Activated naive CD4-positive, alpha-beta T cell treated with anti-CD3 and anti-CD28 coated beads for 36 hours (primary cell): ENCODE measurements at regions of chr21 and their contacts with region 1.

Region 1: DNA sequence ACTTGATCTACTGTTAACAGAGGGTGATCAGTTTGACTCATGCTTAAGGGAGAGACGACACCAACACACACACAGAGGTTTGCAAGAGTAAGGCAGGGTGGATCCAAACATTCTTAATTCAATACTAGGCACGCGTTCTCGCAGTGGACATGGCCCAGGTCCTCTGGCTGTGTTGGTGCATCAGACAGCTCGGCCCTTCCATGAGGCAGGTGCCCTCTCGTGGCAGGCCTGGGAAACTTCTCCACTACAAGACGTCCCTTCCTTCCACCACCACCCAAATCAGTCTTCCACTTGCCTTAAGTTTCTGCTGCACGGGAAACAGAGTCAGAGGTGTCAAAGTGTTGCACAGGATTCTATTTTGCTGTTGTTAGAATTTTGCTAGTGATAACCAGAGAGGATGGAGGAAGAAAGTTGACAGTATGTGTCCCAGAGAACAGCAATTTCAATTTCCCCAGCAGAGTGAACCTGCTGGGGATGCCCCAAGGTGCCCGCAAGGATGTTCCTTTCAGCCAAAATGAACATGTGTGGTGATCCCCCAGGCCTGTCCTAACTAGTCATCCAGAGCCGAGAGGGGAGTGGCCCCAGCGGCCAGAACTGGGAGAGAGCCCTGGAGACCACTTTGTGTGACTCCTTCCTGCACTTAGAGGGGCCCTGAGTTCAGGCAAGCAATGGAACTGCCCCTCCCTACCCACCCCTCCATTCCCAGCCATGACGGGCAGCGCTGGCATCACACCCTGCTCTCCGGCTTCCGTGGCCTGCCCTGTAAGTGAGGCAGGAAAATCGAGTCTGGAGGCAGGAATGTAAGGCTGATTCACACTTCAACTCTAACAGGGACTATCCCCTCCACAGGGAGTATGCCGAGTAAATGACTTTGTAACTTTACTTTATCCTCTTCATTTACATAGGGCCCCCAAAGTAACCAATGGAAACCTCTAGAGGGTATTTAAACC is 34.8 kb downstream of the MX1 start:
- DNase-seq: peak; percentile 71
- H3K4me3 Mint-ChIP-seq: no peak overlapping the region
- H3K27ac Mint-ChIP-seq: no peak overlapping the region
- H3K4me1 Mint-ChIP-seq: no peaks in the 10 kb centered on the region
- H3K27me3 Mint-ChIP-seq: no peaks in the 10 kb centered on the region

Region 2: DNA sequence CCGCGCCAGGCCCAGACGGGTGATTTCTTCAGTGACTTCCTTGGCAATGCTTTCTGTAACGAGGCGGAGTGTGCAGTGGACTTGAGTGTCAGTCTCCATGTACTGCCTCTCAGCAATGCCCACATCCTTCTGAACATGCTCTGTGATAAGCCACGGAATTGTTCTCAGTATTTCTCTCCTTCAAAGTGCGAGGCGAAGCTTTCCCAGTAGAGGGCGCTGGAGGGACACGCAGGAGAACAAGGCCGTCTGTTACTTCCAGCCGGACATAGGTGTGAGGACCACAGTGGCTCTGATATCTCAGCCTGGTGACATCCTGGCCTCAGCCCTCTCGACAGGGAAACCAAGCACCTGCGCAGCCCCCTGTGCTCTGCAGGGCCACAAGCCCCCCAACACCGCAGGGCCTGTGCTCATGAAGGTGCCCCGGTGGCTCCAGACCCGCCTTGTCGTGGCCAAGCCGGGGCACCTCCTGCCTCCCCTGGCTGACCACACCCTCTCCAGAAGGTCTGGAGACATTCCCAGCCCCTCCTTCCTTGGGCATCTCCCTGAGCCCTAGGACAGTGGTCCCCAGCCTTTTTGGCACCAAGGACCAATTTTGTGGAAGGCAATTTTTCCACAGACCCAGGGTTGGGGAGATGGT is 338.9 kb before region 1 on chr21:
- CTCF ChIA-PET with region 1: no interaction called
- intact Hi-C with region 1: loop called (anchors 2 kb)
- DNase-seq: peak; percentile 83
- H3K4me3 Mint-ChIP-seq: no peak overlapping the region
- H3K27ac Mint-ChIP-seq: no peak overlapping the region
- H3K4me1 Mint-ChIP-seq: no peaks in the 10 kb centered on the region
- H3K27me3 Mint-ChIP-seq: peaks cover 14% of the 10 kb centered on the region

Region 3: GRCh38 chr21:41369105-41369919 is 91.5 kb before region 1 on chr21:
- CTCF ChIA-PET with region 1: no interaction called
- intact Hi-C with region 1: loop called (anchors 1 kb)
- DNase-seq: peak; percentile 69
- H3K4me3 Mint-ChIP-seq: peak overlapping the region; percentile 77
- H3K27ac Mint-ChIP-seq: peak overlapping the region; percentile 90
- H3K4me1 Mint-ChIP-seq: peaks cover 69% of the 10 kb centered on the region
- H3K27me3 Mint-ChIP-seq: no peaks in the 10 kb centered on the region